Activated naive CD4-positive, alpha-beta T cell treated with anti-CD3 and anti-CD28 coated beads for 36 hours (primary cell): ENCODE measurements at regions of chr22 and their contacts with region 1.

Region 1: GRCh38 chr22:42614312-42615091 is at the start of gene POLDIP3:
- DNase-seq: peak; percentile 99
- H3K4me3 Mint-ChIP-seq: peak within 1 kb of the TSS; percentile 91
- H3K27ac Mint-ChIP-seq: peak within 1 kb of the TSS; percentile 100
- H3K4me1 Mint-ChIP-seq: peaks cover 50% of the 10 kb centered on the region
- H3K27me3 Mint-ChIP-seq: no peaks in the 10 kb centered on the region
- total RNA-seq, gene POLDIP3: 83.7 to 93.8 TPM

Region 2: GRCh38 chr22:42079319-42080251 is 534.9 kb before region 1 on chr22 and contains the start of gene SMDT1:
- CTCF ChIA-PET with region 1: no interaction called
- intact Hi-C with region 1: loop called (anchors 1 kb)
- DNase-seq: peak; percentile 98
- H3K4me3 Mint-ChIP-seq: peak within 1 kb of the TSS; percentile 95
- H3K27ac Mint-ChIP-seq: peak within 1 kb of the TSS; percentile 96
- H3K4me1 Mint-ChIP-seq: peaks cover 34% of the 10 kb centered on the region
- H3K27me3 Mint-ChIP-seq: no peaks in the 10 kb centered on the region
- total RNA-seq, gene SMDT1: 50.2 to 56.2 TPM

Region 3: GRCh38 chr22:42581762-42582716 is 32.5 kb before region 1 on chr22:
- CTCF ChIA-PET with region 1: interaction called, 4 read pairs
- intact Hi-C with region 1: loop called (anchors 1 kb)
- DNase-seq: peak; percentile 92
- H3K4me3 Mint-ChIP-seq: peak overlapping the region; percentile 96
- H3K27ac Mint-ChIP-seq: peak overlapping the region; percentile 73
- H3K4me1 Mint-ChIP-seq: peaks cover 10% of the 10 kb centered on the region
- H3K27me3 Mint-ChIP-seq: no peaks in the 10 kb centered on the region

Region 4: DNA sequence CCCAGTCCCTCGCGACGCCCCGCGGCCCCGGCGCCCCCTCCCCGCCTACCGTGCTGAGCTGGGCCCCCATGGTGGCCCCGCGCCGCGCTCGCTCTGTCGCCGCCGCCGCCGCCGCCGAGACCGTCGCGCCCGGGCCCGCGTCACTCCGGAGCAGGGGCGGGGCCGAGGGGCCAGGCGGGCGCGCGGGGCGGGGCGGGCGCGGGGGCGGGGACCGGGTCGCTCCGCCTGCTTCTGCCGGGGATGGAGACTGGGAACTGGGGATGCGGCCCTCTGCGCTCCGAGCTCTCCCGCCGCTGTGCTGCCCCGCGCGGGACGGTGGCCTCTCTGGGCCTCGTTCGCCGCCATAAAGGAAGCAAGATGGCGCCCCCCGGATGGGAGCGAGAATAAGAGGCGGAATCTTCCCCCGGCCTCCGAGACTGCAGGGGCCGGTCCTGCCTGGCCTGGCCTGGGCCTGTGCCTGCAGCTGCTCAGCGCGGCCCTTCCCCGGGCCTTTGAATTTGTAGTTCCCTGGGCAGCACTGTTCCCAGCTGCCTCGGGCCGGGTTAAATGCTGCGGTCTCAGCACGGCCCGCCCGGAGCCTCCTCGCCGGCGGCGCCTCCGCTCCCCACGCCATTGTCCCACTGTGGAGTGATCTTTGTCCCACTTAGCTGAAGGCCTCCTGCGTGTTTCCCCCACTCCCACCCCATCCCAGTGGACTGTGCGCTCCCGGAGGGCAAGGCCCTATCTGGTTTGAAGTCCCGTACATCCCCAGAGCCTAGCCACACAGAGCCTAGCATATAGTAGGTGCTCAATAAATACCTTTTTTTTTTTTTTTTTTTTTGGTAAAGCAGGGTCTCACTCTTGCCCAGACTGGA is 35.0 kb after region 1 on chr22 and contains the start of gene CYB5R3:
- CTCF ChIA-PET with region 1: interaction called, 4 read pairs
- intact Hi-C with region 1: loop called (anchors 1 kb)
- DNase-seq: peak; percentile 87
- H3K4me3 Mint-ChIP-seq: peak within 1 kb of the TSS; percentile 93
- H3K27ac Mint-ChIP-seq: peak within 1 kb of the TSS; percentile 78
- H3K4me1 Mint-ChIP-seq: peaks cover 28% of the 10 kb centered on the region
- H3K27me3 Mint-ChIP-seq: no peaks in the 10 kb centered on the region
- total RNA-seq, gene CYB5R3: 61.2 to 63.9 TPM